H1 (cell line): ENCODE measurements at regions of chr10 and their contacts with region 1.

Region 1: DNA sequence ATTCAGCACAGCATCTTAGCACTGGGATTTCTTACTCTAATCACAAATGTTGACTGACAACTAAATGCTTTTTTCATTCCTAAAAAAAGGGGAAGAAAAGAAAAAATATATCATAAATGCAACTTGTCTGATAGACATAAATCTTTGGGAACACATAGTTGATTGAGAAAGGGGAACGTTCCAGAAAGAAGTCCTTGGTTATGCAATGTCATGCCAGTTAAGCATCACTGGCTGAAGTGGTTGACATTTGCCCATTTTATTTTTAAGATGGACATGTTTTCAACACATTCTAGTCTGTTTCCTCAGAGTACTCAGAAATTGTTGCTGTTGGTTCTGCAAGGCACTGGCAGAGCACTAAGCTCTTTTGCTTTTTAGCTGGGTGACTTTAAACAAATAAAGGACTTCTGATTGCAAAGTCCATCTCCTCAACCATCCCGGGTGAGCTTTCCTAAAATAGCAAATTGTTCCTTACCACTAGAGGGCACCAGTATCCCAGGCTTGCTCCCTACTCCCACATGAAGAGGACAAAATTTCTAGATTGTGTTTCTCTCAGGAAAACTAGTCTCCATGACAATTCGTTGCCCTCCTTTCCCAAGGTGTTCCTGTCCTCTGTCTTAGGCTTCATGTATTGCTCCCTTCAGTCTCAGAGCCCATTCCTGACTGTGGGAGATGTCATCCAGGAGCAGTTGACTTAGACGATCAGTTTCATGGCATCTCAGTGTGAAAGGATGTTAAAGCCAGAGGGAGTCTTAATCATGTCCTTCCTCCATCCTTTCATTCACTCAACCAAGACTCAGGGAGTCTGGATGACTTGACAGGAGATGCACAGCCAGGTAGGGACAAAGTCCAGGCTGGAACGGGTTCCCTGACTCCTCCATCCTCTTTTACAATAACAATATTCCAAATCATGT is 23.9 kb downstream of the OPALIN start:
- DNase-seq: peak in 1 of 2 experiments; percentile 50
- H3K4me3 ChIP-seq: no peak overlapping the region
- H3K27ac ChIP-seq: no peak overlapping the region
- H3K4me1 ChIP-seq: peaks cover 0 to 2% (median 1%) of the 10 kb centered on the region in 4 experiments; a peak in 1 of 7 replicates
- H3K27me3 ChIP-seq: 0 out of 7 replicates have a peak, but pooled peaks cover 0 to 1% (median 0%) of the 10 kb centered on the region in 4 experiments
- CTCF ChIP-seq: peak in 2 of 3 experiments; percentile 80 to 85; a peak in 3 of 4 replicates
- EP300 ChIP-seq: no peak; a peak in 1 of 3 replicates
- POLR2A ChIP-seq: no peak
- RAD21 ChIP-seq: peak; percentile 79 to 85

Region 2: GRCh38 chr10:96306516-96306915 is 28.4 kb before region 1 on chr10:
- CTCF ChIA-PET with region 1: interaction called, 20 read pairs
- POLR2A ChIA-PET with region 1: interaction called, 5 read pairs
- DNase-seq: no peak
- H3K4me3 ChIP-seq: no peak overlapping the region
- H3K27ac ChIP-seq: no peak overlapping the region
- H3K4me1 ChIP-seq: peaks cover 3 to 24% (median 22%) of the 10 kb centered on the region in 4 experiments
- H3K27me3 ChIP-seq: no peaks in the 10 kb centered on the region
- CTCF ChIP-seq: no peak
- EP300 ChIP-seq: no peak
- POLR2A ChIP-seq: no peak
- RAD21 ChIP-seq: no peak

Region 3: GRCh38 chr10:96346295-96346694 is 11.4 kb after region 1 on chr10:
- CTCF ChIA-PET with region 1: interaction called, 11 read pairs
- POLR2A ChIA-PET with region 1: no interaction called
- DNase-seq: no peak
- H3K4me3 ChIP-seq: peak overlapping the region in 1 of 4 experiments; percentile 31; a peak in 1 of 8 replicates
- H3K27ac ChIP-seq: no peak overlapping the region
- H3K4me1 ChIP-seq: peaks cover 0 to 8% (median 7%) of the 10 kb centered on the region in 4 experiments; a peak in 6 of 7 replicates
- H3K27me3 ChIP-seq: peaks cover 0 to 1% (median 0%) of the 10 kb centered on the region in 4 experiments; a peak in 1 of 7 replicates
- CTCF ChIP-seq: no peak
- EP300 ChIP-seq: no peak
- POLR2A ChIP-seq: no peak
- RAD21 ChIP-seq: no peak